Sigmoid colon (tissue), 7 donors: ENCODE measurements at regions of chr2 and their contacts with region 1.

Region 1: GRCh38 chr2:215476424-215476823 is 40.6 kb upstream of the FN1 start:
- DNase-seq: no peak
- H3K4me3 ChIP-seq: no peak overlapping the region
- H3K27ac ChIP-seq: no peak overlapping the region
- H3K4me1 ChIP-seq: no peaks in the 10 kb centered on the region
- H3K27me3 ChIP-seq: no peaks in the 10 kb centered on the region
- CTCF ChIP-seq: no peak
- EP300 ChIP-seq: no peak
- POLR2A ChIP-seq: no peak

Region 2: GRCh38 chr2:215579809-215580208 is 103.4 kb after region 1 on chr2:
- intact Hi-C with region 1: loop called (anchors 10 kb)
- DNase-seq: no peak
- H3K4me3 ChIP-seq: no peak overlapping the region
- H3K27ac ChIP-seq: no peak overlapping the region
- H3K4me1 ChIP-seq: no peaks in the 10 kb centered on the region
- H3K27me3 ChIP-seq: no peaks in the 10 kb centered on the region
- CTCF ChIP-seq: no peak
- EP300 ChIP-seq: no peak
- POLR2A ChIP-seq: no peak